Dendritic cell treated with granulocyte-macrophage colony-stimulating factor and Interleukin-4, amounts not matched to agents 40 ng/mL and 50 ng/mL, for 4 days (primary cell): ENCODE measurements at regions of chr15 and their contacts with region 1.

Region 1: GRCh38 chr15:75153087-75153486 is 48.6 kb upstream of the C15orf39 start:
- H3K4me3 Mint-ChIP-seq: peak overlapping the region; percentile 68
- H3K27ac Mint-ChIP-seq: peak overlapping the region; percentile 86
- H3K4me1 Mint-ChIP-seq: peaks cover 83% of the 10 kb centered on the region
- H3K27me3 Mint-ChIP-seq: no peaks in the 10 kb centered on the region

Region 2: GRCh38 chr15:75112848-75113492 is 40.1 kb before region 1 on chr15:
- intact Hi-C with region 1: loop called (anchors 5 kb)
- H3K4me3 Mint-ChIP-seq: no peak overlapping the region
- H3K27ac Mint-ChIP-seq: peak overlapping the region; percentile 64
- H3K4me1 Mint-ChIP-seq: peaks cover 61% of the 10 kb centered on the region
- H3K27me3 Mint-ChIP-seq: peaks cover 2% of the 10 kb centered on the region